Activated CD4-positive, alpha-beta T cell treated with anti-CD3 and anti-CD28 coated beads, Interleukin-2, amount 10 ng/mL, durations not matched to agents 24 days and 14 days (primary cell): ENCODE measurements at regions of chr19 and their contacts with region 1.

Region 1: GRCh38 chr19:27793644-27794493 is 1419.1 kb downstream of the UQCRFS1 start:
- DNase-seq: peak; percentile 97
- H3K4me3 Mint-ChIP-seq: peak overlapping the region; percentile 92
- H3K27ac Mint-ChIP-seq: peak overlapping the region; percentile 94
- H3K4me1 Mint-ChIP-seq: peaks cover 20% of the 10 kb centered on the region
- H3K27me3 Mint-ChIP-seq: no peaks in the 10 kb centered on the region

Region 2: DNA sequence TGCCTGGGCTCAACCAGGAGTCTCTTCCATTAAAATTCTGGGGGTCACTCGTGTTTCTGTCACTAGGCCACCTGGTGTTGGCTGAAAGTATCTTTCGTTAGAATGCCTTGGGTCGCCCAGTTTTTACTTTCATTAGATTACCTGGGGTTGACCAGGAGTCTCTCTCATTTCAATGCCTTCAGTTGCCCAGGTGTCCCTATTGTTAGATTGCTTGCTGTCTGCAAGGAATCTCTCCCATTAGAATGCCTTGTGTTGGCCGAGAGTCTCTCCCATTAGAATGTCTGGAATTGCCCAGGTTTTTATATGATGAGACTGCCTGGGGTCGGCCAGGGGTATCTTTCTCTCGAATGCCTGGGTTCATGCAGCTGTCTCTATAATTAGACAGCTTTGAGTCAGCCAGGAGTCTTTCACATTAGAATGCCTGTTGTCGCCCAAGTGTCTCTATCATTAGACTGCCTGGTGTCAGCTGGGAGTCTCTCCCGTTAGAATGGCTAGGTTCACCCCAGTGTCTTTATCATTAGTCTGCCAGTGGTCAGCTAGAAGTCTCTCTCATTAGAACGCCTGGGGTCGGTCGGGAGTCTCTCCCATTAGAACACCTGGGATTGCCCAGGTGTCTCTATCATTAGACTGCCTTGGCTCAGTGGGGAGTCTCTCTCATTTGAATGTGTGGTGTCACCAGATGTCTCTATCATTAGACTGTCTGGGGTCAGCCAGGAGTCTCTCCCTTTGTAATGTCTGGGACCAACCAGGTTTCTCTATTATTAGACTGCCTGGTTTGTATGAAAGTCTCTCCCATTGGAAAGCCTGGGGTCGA is 27.8 kb before region 1 on chr19:
- intact Hi-C with region 1: no loop called
- DNase-seq: no peak
- H3K4me3 Mint-ChIP-seq: no peak overlapping the region
- H3K27ac Mint-ChIP-seq: no peak overlapping the region
- H3K4me1 Mint-ChIP-seq: no peaks in the 10 kb centered on the region
- H3K27me3 Mint-ChIP-seq: no peaks in the 10 kb centered on the region

Region 3: GRCh38 chr19:28701491-28701890 is 907.6 kb after region 1 on chr19:
- intact Hi-C with region 1: loop called (anchors 5 kb)
- DNase-seq: no peak
- H3K4me3 Mint-ChIP-seq: no peak overlapping the region
- H3K27ac Mint-ChIP-seq: no peak overlapping the region
- H3K4me1 Mint-ChIP-seq: no peaks in the 10 kb centered on the region
- H3K27me3 Mint-ChIP-seq: no peaks in the 10 kb centered on the region

Region 4: GRCh38 chr19:29212648-29213573 is 1419.0 kb after region 1 on chr19 and contains the start of gene UQCRFS1:
- intact Hi-C with region 1: loop called (anchors 2 kb)
- DNase-seq: peak; percentile 99
- H3K4me3 Mint-ChIP-seq: peak within 1 kb of the TSS; percentile 96
- H3K27ac Mint-ChIP-seq: peak within 1 kb of the TSS; percentile 97
- H3K4me1 Mint-ChIP-seq: peaks cover 38% of the 10 kb centered on the region
- H3K27me3 Mint-ChIP-seq: peaks cover 5% of the 10 kb centered on the region
- total RNA-seq, gene UQCRFS1: 44.5 and 45.4 TPM in 2 replicates